ENCODE measurements at regions of chr9 and their contacts with region 1.

Region 1: GRCh38 chr9:121992571-121993212 is 100.4 kb downstream of the TTLL11 start:
- DNase-seq: peak in 4 of 5 donors; percentile 61 to 91 (median 76)
- H3K4me3 ChIP-seq: no peak overlapping the region
- H3K27ac ChIP-seq: no peak overlapping the region
- H3K4me1 ChIP-seq: peaks cover 0 to 17% (median 5%) of the 10 kb centered on the region in 3 donors
- H3K27me3 ChIP-seq: no peaks in the 10 kb centered on the region
- CTCF ChIP-seq: peak; percentile 84

Region 2: DNA sequence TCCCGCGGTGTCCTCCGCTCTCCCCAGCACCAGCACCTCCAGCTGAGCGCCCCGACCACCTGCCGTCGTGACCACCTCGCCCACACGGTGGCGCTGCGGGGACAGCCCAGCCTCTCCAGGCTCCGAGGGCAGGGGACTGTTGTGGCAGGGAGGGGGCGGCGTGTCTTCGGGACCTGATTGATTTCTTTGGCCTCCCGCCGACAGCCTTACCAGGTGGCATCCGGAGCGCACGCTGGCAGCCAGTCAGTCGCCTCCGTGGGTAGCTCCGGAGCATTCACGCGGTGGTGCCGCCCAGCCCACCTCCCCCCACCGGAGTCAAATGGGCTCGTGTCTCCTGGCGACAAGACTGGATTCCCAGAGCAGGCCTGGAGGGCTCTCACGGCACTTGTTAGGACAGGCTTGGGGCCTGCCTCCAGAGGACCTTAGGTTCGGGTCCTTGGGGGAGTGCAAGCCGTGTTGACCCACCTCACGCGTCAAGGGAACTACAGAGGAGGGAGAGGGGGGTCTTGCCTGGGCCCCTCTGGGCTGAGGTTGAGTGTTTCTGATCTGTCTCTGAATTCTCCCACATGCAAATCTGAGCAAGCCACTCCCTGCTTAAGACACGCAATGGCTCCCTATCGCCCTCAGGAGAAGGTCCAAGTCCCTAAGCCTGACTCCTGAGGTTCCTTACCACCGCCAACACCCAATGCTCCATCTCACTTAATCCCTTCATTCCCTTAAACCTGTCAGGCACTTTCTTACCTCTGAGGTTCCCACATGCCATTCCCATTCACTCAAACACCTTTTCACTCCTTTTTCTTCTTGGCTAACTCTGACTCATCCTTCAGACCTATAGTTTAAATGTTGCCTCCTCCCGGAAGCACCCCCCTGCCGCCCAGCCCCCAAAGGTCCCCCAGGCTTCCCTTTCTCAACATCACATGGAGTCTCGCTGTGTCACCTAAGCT is 441.9 kb before region 1 on chr9:
- intact Hi-C with region 1: loop called (anchors 10 kb)
- DNase-seq: peak; percentile 92 to 95 (median 94)
- H3K4me3 ChIP-seq: peak overlapping the region in 1 of 3 donors; percentile 47
- H3K27ac ChIP-seq: no peak overlapping the region
- H3K4me1 ChIP-seq: peaks cover 0 to 3% (median 0%) of the 10 kb centered on the region in 3 donors
- H3K27me3 ChIP-seq: no peaks in the 10 kb centered on the region
- CTCF ChIP-seq: peak; percentile 92

Region 3: GRCh38 chr9:121686930-121687541 is 305.7 kb before region 1 on chr9:
- intact Hi-C with region 1: loop called (anchors 10 kb)
- DNase-seq: peak; percentile 76 to 87 (median 82)
- H3K4me3 ChIP-seq: no peak overlapping the region
- H3K27ac ChIP-seq: no peak overlapping the region
- H3K4me1 ChIP-seq: peaks cover 0 to 4% (median 3%) of the 10 kb centered on the region in 3 donors
- H3K27me3 ChIP-seq: no peaks in the 10 kb centered on the region
- CTCF ChIP-seq: peak; percentile 79

Region 4: DNA sequence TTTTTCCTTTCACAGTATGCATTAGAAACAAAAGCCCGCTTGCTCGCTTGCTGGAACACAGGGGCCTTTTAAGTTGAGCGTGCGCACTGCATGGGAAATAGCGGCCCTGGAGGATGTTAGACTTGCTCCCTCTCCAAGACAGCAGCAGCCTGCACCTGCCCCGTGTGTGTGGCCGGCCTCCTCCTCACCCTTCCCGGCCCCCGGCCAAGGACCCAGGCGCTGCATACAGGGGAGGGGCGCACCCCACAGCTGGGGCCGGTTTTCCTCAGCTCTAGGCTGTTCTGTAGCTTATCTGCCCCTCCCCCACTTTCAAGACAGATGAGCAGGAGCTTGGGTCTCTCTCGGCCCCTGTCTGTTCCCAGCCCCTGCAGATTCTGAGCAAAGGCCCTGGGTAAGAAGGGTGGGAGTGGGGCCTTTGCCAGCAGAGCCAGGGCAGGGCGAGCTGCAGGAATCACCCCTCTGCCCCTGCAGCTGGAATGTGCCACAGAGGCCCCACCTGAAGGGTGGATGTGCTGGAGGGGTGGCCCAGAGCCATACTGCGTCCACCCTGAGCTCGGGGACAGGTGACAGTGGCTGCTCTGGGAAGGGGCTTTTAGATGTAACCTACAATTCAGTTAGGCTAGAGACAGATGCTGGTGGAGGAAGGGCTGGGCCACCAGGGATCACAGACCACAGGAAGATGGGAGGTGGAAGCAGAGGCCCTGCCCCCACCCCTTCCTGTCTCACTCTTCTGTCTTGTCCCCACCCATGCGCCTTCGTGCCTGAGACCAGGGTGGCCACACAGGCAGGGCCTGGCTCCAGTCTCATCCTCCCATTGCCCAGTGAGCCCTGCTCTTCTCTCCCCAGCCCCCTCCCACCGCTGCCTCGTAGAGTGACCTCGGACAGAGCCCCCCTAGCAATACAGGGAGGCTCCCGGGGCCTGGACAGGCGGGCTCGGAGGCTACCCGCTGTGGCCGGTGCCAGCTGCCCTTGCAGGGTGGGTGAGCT is 208.9 kb before region 1 on chr9:
- intact Hi-C with region 1: no loop called
- DNase-seq: peak in 3 of 5 donors; percentile 13 to 67 (median 45)
- H3K4me3 ChIP-seq: no peak overlapping the region
- H3K27ac ChIP-seq: no peak overlapping the region
- H3K4me1 ChIP-seq: no peaks in the 10 kb centered on the region
- H3K27me3 ChIP-seq: no peaks in the 10 kb centered on the region
- CTCF ChIP-seq: no peak

Region 5: GRCh38 chr9:122029898-122030297 is 37.2 kb after region 1 on chr9:
- intact Hi-C with region 1: no loop called
- DNase-seq: no peak
- H3K4me3 ChIP-seq: no peak overlapping the region
- H3K27ac ChIP-seq: no peak overlapping the region
- H3K4me1 ChIP-seq: peaks cover 0 to 6% (median 0%) of the 10 kb centered on the region in 3 donors
- H3K27me3 ChIP-seq: no peaks in the 10 kb centered on the region
- CTCF ChIP-seq: no peak

Measured in kidney (tissue), 22 donors.